ENCODE measurements at regions of chr1 and their contacts with region 1.

Region 1: GRCh38 chr1:165392634-165393571 is 36.4 kb upstream of the LMX1A start:
- DNase-seq: peak; percentile 60
- H3K4me3 ChIP-seq: no peak overlapping the region
- H3K27me3 ChIP-seq: peaks cover 19% of the 10 kb centered on the region
- CTCF ChIP-seq: peak; percentile 96

Region 2: GRCh38 chr1:165317612-165318011 is 75.3 kb before region 1 on chr1:
- CTCF ChIA-PET with region 1: no interaction called
- POLR2A ChIA-PET with region 1: no interaction called
- DNase-seq: no peak
- H3K4me3 ChIP-seq: no peak overlapping the region
- H3K27me3 ChIP-seq: no peaks in the 10 kb centered on the region
- CTCF ChIP-seq: no peak

Region 3: GRCh38 chr1:165367375-165367993 is 25.4 kb before region 1 on chr1:
- CTCF ChIA-PET with region 1: interaction called, 38 read pairs
- POLR2A ChIA-PET with region 1: no interaction called
- DNase-seq: no peak
- H3K4me3 ChIP-seq: no peak overlapping the region
- H3K27me3 ChIP-seq: no peaks in the 10 kb centered on the region; the same call in none of the 2 replicates
- CTCF ChIP-seq: peak; percentile 95

Region 4: DNA sequence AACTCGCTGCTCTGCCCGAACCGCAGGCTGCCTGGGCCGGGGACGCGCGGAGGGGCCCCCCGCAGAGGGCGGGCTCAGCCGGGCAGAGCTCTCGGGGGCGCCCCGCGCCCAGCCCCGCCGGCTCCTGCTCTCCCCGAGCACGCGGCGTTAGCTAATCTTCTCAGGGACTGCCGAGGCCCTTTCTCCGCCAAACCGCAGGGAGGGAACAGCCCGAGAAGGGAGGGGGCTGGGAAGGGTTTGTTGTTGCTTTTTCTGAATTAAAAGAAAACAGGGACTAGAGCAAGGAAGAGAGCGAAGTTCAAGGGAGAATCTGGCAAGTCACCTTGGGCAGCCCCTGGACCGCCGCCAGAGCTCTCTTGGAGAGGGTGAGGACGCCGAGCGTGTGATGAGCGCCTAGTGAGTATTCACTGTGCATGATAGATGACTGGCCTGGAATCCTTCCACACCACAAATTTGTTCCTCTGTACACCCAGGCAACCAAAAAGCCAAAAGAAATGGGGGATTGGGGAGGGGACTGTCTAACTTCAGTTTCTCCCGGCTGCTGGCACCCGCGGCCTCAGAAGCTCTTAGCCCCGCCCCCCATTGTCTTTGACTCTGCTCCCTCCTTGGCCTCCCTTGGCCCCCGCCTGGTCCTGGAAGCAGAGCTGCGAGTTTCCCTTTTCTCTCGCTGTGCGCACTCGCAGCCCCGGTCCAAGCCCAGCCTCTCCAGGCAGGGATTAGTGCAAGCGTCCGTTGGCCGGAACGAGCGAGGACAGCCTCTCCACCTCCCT is 16.7 kb before region 1 on chr1:
- CTCF ChIA-PET with region 1: interaction called, 54 read pairs
- POLR2A ChIA-PET with region 1: no interaction called
- DNase-seq: peak; percentile 35
- H3K4me3 ChIP-seq: peak overlapping the region; percentile 28
- H3K27me3 ChIP-seq: peaks cover 8% of the 10 kb centered on the region
- CTCF ChIP-seq: no peak

Region 5: DNA sequence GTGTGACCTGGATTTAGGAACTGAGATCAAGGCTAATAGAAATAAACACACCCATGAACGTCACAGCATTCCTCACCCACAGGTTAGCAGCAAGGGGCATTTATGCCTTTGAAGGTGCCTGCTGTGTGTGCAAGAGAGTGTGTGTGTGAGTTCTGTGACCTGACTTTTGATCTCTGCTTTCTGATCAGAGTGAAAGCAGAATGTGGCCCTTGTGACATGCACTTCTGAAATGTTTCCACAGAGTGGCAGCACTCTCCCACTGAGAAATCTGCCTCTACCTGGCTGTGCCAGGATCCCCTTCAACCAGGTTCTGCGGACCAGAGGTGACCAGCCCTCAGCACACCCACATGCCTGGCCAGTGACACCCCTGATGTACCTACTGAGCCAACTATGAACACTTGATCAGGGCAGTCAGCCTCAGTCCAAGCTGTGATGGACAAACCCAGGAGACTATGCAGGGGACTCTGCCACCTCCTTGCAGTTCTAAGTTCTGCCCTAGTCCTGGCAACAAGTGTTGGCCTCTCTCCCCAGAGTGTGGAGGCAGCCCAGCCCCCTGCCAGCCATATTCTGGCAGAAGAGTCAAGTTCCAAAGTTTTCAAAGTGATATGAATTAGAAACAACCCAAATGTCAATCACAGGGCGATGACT is 11.1 kb after region 1 on chr1:
- CTCF ChIA-PET with region 1: interaction called, 14 read pairs
- POLR2A ChIA-PET with region 1: no interaction called
- DNase-seq: no peak
- H3K4me3 ChIP-seq: no peak overlapping the region
- H3K27me3 ChIP-seq: peaks cover 7% of the 10 kb centered on the region; the same call in 1 of the 2 replicates
- CTCF ChIP-seq: peak; percentile 43

Region 6: DNA sequence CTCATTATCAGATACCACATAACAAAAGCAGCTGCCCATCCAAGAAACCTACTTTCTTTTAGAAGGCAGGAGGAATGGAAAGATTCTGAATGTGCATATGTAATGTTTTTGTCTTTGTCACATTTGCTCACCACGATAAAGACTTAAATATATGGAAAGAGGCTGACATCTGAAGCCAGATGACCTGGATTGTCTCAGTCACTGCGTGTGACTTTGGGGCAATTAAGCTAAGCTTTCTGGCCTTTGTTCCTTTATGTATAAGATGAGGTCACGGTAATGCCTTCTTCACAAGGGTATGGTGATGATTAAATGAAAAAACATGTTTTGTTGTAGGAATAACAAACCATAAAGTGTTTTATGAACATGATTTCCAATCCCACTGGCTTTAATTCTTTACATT is 193.5 kb after region 1 on chr1:
- CTCF ChIA-PET with region 1: interaction called, 236 read pairs
- POLR2A ChIA-PET with region 1: no interaction called
- DNase-seq: no peak
- H3K4me3 ChIP-seq: no peak overlapping the region
- H3K27me3 ChIP-seq: peaks cover 8% of the 10 kb centered on the region; the same call in 1 of the 2 replicates
- CTCF ChIP-seq: no peak